Vagina (tissue), 2 donors: ENCODE measurements at regions of chr9 and their contacts with region 1.

Region 1: GRCh38 chr9:105157130-105157583 is 87.3 kb upstream of the SLC44A1 start:
- DNase-seq: peak in 1 of 2 donors; percentile 92
- H3K4me3 ChIP-seq: no peak overlapping the region
- H3K27ac ChIP-seq: no peak overlapping the region
- H3K4me1 ChIP-seq: no peaks in the 10 kb centered on the region
- H3K27me3 ChIP-seq: no peaks in the 10 kb centered on the region
- CTCF ChIP-seq: peak; percentile 41 to 52 (median 51)
- POLR2A ChIP-seq: no peak

Region 2: DNA sequence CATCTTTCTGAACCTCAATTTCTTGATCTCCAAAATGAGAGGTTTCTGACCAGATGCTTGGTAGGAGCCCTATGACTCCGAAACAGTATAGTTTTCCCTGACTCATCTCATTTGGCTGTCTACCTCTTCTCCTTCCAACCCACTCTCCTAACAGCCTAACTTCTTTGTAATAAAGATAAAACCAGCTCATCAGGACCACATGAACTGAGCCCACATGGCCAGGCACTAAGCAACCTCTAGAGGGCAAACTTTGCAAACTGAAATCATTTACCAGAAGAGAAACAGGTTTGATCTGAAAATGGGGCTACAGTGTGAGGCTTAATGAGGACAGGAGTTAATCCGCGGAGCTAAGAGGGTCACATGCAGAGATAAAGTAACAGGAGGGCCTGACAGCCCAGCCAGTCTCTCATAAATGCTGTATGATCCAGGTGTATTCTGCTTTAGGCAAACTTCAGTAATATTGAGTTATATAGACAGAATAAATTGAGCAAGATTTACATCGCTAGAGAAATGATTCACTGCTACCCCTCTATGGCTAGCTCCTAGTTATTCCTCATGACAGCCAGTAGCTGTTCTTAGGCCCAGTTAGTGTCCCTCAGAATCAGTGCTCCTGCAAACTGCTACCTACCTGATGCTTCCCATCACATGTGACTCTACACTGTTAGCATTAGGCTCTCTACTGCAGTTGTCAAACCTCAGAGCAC is 293.8 kb before region 1 on chr9:
- intact Hi-C with region 1: loop called (anchors 10 kb)
- DNase-seq: no peak
- H3K4me3 ChIP-seq: no peak overlapping the region
- H3K27ac ChIP-seq: peak overlapping the region; percentile 8
- H3K4me1 ChIP-seq: peaks cover 62% of the 10 kb centered on the region
- H3K27me3 ChIP-seq: no peaks in the 10 kb centered on the region
- CTCF ChIP-seq: peak in 2 of 3 experiments; percentile 55 to 64
- POLR2A ChIP-seq: no peak

Region 3: DNA sequence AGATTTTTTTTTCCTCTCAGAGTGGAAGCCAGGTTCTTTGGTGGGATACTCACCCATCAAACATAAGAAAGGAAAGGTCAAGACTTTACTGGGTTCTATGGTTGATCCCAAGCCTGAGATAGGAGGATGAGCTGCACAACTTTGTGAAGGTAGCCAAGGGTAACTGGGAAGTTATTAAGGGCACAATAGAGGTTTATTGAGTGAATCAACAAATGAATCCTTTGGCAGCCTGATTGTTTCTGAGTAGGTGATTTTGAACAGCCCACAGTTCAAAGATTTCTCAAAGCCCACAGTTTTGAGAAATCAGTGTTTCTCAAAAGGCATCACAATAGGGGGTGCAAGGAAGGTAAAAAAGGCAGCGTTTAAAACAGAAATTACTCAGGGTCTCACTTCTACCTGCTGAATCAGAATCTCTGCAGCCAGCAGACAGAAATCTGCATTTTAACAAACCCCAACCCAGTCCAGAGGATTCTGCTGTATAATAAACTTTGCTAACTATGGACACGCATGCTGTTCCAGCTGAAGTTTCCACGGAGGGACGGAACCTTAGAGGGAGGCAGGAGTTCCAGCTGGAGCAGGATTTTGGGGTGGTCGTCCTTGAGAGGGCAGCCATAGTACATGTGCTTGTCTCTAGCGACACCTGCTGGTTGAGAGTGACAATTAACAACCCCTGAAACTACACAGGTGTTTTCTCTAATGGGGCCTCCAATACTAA is 257.9 kb after region 1 on chr9:
- intact Hi-C with region 1: loop called (anchors 10 kb)
- DNase-seq: no peak
- H3K4me3 ChIP-seq: no peak overlapping the region
- H3K27ac ChIP-seq: no peak overlapping the region
- H3K4me1 ChIP-seq: peaks cover 5% of the 10 kb centered on the region
- H3K27me3 ChIP-seq: no peaks in the 10 kb centered on the region
- CTCF ChIP-seq: peak; percentile 88 to 91 (median 89)
- POLR2A ChIP-seq: no peak